Common myeloid progenitor, CD34-positive (primary cell): ENCODE measurements at regions of chr4 and their contacts with region 1.

Region 1: GRCh38 chr4:89879215-89879614 is 15.4 kb upstream of the MMRN1 start:
- DNase-seq: no peak
- H3K4me3 ChIP-seq: no peak overlapping the region
- H3K27ac ChIP-seq: no peak overlapping the region
- H3K4me1 ChIP-seq: peaks cover 0 to 3% (median 0%) of the 10 kb centered on the region in 4 experiments
- H3K27me3 ChIP-seq: no peaks in the 10 kb centered on the region

Region 2: GRCh38 chr4:89868999-89869589 is 10.1 kb before region 1 on chr4:
- CTCF ChIA-PET with region 1: interaction called, 11 read pairs
- POLR2A ChIA-PET with region 1: no interaction called
- DNase-seq: peak in 2 of 3 donors; percentile 34 to 41
- H3K4me3 ChIP-seq: no peak overlapping the region
- H3K27ac ChIP-seq: no peak overlapping the region
- H3K4me1 ChIP-seq: no peaks in the 10 kb centered on the region
- H3K27me3 ChIP-seq: no peaks in the 10 kb centered on the region